ENCODE measurements at regions of chr13 and their contacts with region 1.

Region 1: DNA sequence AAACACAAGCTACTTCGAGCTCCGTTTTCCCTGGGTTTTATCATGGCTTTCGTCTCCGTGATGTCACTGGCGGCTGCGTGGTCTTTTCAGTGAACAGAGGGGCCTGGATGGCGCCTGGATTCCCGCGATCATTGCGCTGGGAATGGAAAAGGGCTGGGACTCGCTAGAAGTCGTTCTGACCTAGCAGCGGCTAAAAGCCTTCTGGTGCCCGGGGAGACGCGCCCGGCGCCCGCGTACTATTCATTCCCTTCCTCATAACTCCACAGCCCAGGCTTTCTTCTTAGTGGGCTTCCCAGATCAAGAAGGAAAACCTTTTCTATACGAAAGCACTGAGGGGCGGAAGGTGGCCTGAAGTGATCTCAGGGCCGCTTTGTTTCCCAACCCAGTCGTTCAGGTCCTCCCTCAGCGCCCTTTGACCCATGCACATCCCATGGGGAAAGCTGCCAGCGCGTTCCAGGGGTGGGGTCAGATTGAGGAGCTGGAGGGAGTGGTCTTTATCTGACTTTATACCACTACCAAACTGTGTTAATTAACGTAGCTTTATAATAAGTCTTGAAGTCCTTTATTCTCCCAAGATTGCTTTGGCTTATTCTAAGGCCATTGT is 96.6 kb downstream of the ELF1 start:
- DNase-seq: no peak
- ATAC-seq: no peak
- H3K4me3 Mint-ChIP-seq: peak overlapping the region; percentile 66
- H3K27ac Mint-ChIP-seq: peak overlapping the region; percentile 69
- H3K4me1 Mint-ChIP-seq: peaks cover 24% of the 10 kb centered on the region
- H3K27me3 Mint-ChIP-seq: no peaks in the 10 kb centered on the region
- CTCF ChIP-seq: no peak

Region 2: GRCh38 chr13:40206241-40207000 is 716.1 kb before region 1 on chr13:
- CTCF ChIA-PET with region 1: no interaction called
- POLR2A ChIA-PET with region 1: no interaction called
- intact Hi-C with region 1: loop called (anchors 2 kb)
- DNase-seq: peak; percentile 52
- ATAC-seq: peak; percentile 66
- H3K4me3 Mint-ChIP-seq: peak overlapping the region; percentile 76
- H3K27ac Mint-ChIP-seq: peak overlapping the region; percentile 100
- H3K4me1 Mint-ChIP-seq: peaks cover 72% of the 10 kb centered on the region
- H3K27me3 Mint-ChIP-seq: no peaks in the 10 kb centered on the region
- CTCF ChIP-seq: no peak

Region 3: DNA sequence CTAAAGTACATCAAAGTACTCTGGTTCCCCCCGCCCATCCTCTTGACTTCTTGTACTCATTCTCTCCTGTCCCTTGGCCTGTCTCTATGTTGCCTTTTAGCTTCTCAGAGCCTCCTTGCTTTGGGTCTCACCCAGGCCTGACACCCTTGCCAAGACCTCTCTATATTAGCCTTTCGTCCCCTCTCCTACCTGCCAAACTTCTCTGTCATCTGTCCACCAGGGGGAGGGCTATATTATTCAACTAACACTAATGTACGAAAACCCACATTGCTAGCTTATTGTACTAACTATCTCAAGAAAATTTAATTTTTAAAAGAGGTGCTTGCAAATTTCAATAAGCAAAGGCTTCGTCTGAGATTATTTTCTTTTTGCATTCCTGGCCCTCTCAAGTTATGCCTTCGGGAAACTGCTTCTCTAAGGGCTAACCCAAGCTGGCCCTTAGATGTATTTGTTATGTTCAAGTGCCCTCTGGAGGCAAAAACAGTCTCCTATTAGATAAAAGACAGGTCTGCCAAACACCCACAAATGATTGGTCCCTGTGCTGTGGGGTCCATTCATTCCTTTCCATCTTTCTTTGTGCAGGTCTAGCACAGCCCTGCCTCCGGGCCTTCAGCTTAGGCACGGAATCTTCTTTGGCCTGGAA is 145.3 kb before region 1 on chr13:
- CTCF ChIA-PET with region 1: interaction called, 10 read pairs
- POLR2A ChIA-PET with region 1: interaction called, 4 read pairs
- intact Hi-C with region 1: loop called (anchors 1 kb)
- DNase-seq: no peak
- ATAC-seq: peak; percentile 85
- H3K4me3 Mint-ChIP-seq: peak overlapping the region; percentile 70
- H3K27ac Mint-ChIP-seq: peak overlapping the region; percentile 91
- H3K4me1 Mint-ChIP-seq: peaks cover 25% of the 10 kb centered on the region
- H3K27me3 Mint-ChIP-seq: no peaks in the 10 kb centered on the region
- CTCF ChIP-seq: peak; percentile 91

Region 4: DNA sequence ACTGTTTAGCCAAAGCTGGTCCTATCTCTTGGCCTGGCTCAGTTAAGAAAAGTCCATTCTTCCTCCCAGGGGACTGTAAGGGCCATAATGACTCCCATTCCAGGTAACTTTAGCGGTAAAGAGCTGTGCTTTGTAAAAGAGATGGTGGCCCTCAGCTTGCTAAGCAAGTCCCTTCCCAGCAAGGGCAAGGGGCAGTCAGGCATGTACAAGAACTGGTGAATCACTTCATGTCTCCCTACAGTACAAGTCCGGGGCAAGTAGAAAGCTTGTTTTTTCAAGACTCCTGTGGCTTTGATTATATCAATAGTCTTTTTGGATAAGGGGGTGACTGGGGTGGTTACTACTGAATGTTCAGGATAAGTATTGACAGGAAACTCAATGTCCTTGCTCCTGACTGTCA is 44.2 kb before region 1 on chr13:
- CTCF ChIA-PET with region 1: no interaction called
- POLR2A ChIA-PET with region 1: no interaction called
- intact Hi-C with region 1: no loop called
- DNase-seq: no peak
- ATAC-seq: no peak
- H3K4me3 Mint-ChIP-seq: no peak overlapping the region
- H3K27ac Mint-ChIP-seq: no peak overlapping the region
- H3K4me1 Mint-ChIP-seq: no peaks in the 10 kb centered on the region
- H3K27me3 Mint-ChIP-seq: no peaks in the 10 kb centered on the region
- CTCF ChIP-seq: no peak

Region 5: GRCh38 chr13:40933508-40934204 is 11.1 kb after region 1 on chr13:
- CTCF ChIA-PET with region 1: interaction called, 5 read pairs
- POLR2A ChIA-PET with region 1: interaction called, 12 read pairs
- intact Hi-C with region 1: loop called (anchors 1 kb)
- DNase-seq: no peak
- ATAC-seq: peak; percentile 85
- H3K4me3 Mint-ChIP-seq: peak overlapping the region; percentile 8
- H3K27ac Mint-ChIP-seq: peak overlapping the region; percentile 79
- H3K4me1 Mint-ChIP-seq: peaks cover 46% of the 10 kb centered on the region
- H3K27me3 Mint-ChIP-seq: no peaks in the 10 kb centered on the region
- CTCF ChIP-seq: no peak

Region 6: DNA sequence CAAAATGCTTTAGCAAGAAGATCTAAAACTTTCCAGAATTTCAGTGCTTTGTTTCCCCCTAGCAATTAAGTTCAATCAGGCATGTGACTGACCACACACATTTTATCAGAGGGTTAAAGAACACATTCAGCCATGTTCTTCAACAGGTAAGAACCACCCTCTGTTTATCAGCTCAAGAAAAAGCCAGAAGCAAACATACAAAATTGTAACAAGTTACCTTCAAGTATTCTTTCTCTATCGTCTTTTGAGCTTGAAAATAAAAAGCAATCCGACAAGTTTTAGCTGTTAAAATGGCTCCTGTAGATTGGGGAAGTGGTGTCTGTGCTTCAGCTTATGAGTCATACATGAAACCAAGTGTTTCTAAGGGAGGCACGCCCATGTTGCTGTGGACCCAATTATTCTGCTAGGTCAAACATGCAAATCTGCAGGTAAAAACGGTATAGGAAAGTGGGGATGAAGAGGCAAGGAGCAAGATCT is 96.5 kb after region 1 on chr13 and contains the start of gene ELF1:
- CTCF ChIA-PET with region 1: interaction called, 3 read pairs
- POLR2A ChIA-PET with region 1: interaction called, 21 read pairs
- intact Hi-C with region 1: loop called (anchors 1 kb)
- DNase-seq: peak; percentile 26
- ATAC-seq: peak; percentile 87
- H3K4me3 Mint-ChIP-seq: peak within 1 kb of the TSS; percentile 94
- H3K27ac Mint-ChIP-seq: peak within 1 kb of the TSS; percentile 99
- H3K4me1 Mint-ChIP-seq: peaks cover 46% of the 10 kb centered on the region
- H3K27me3 Mint-ChIP-seq: no peaks in the 10 kb centered on the region
- CTCF ChIP-seq: no peak
- total RNA-seq, gene ELF1: 129 and 136 TPM in 2 replicates

Region 7: DNA sequence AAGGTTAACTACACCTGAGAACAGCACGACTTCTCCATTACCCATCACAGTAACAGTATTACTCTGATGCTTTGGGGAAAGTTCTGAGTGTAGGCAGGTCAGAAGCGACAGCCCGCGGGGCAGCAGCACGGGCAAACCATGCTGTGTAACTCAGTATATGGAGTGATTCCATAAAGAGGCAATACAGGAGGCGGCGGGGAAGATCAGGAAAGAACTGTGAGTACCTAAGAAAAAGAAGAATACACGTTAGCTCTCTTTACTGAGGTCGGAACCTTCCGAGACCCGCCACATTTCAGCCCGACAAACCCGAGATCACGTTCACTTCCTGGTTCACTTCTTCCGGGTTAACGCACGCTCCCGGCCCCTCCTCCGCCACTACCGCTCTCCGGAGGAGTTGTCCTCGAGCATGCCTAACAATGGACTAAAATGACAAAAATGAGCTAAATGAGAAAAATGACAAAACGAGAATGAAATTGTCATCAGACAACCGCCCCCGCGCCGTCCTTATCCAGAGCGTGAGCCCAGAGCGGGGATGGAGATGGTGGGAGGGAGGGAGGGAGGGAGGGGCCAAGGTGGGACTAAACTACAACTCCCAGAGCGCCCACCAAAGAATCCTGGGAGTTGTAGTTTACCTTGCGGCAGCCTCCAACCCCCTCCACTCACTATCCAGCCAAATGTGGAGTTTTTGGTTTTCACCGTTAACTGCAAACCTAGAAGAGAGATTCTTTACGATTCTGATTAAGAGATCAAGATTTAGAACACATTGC is 340.9 kb after region 1 on chr13 and contains the start of gene MTRF1:
- CTCF ChIA-PET with region 1: interaction called, 3 read pairs
- POLR2A ChIA-PET with region 1: interaction called, 3 read pairs
- intact Hi-C with region 1: loop called (anchors 1 kb)
- DNase-seq: peak; percentile 72
- ATAC-seq: peak; percentile 93
- H3K4me3 Mint-ChIP-seq: peak within 1 kb of the TSS; percentile 96
- H3K27ac Mint-ChIP-seq: peak within 1 kb of the TSS; percentile 99
- H3K4me1 Mint-ChIP-seq: peaks cover 17% of the 10 kb centered on the region
- H3K27me3 Mint-ChIP-seq: no peaks in the 10 kb centered on the region
- CTCF ChIP-seq: no peak
- total RNA-seq, gene MTRF1: 22.2 and 26.7 TPM in 2 replicates